GM10248 (cell line): ENCODE measurements at regions of chr7 and their contacts with region 1.

Region 1: DNA sequence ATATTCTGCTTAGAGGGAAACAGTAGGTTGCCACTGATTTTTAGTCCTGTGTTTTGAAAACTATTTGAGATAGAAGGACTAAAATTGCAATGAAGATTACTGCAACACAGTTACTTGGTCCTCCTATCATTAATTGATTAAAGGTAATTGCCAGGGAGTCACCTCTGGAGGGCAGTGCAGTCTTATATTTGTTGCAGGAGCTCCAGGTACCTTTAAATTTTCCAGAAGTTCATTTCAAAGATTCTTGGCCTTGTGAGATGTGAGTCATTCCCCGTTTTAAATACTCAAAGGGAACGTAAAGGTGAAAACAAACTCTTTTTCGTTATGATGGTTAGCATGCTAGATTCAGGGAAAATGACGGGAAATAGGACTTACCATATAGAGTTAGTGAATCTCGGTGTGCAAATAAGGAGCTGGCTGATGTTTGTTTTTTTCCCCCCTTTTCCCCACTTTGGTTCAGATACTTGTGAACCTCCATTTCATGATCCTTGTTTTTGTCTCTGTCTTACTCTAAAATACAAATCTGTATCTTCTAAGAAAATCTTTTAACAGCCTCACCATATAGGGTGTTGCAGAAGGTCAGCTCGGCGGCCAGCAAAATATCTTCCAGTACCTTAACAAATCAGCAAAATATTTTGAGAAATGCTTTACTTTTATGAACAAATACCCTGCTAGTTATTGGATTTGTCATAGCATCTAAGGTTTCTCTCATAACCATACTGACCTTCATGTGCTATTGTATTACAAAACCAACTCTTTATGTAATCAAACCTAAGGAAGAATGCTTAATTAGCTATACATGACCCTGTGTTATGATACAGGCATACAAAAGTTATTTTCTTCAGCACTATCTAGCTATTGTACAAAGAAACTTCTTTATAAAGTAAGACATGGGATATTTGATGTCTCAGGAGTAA is 143.0 kb upstream of the HDAC9 start:
- DNase-seq: peak; percentile 15
- CTCF ChIP-seq: peak; percentile 56

Region 2: DNA sequence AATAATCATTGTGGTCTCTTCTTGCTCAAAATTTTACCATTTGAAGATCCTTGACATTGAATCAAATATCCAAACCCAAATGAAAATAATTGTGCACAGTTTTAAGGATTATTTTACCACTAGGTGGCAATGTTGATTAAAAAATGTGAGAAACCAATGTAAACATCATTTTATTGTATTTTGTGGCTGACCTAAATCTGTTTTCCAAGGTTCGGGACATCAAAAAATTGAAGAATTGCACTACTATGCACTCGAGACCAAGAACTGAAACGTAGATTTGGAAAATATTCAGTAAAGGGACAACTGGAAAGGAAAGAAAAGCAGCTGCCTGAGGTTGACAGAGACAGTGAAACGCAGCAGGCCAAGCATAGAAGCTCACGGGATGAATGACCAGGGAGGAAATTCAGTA is 671.6 kb before region 1 on chr7:
- CTCF ChIA-PET with region 1: interaction called, 10 read pairs
- POLR2A ChIA-PET with region 1: no interaction called
- DNase-seq: no peak
- CTCF ChIP-seq: peak; percentile 34

Region 3: GRCh38 chr7:18370633-18371032 is 18.0 kb after region 1 on chr7:
- CTCF ChIA-PET with region 1: interaction called, 17 read pairs
- POLR2A ChIA-PET with region 1: no interaction called
- DNase-seq: no peak
- CTCF ChIP-seq: no peak

Region 4: DNA sequence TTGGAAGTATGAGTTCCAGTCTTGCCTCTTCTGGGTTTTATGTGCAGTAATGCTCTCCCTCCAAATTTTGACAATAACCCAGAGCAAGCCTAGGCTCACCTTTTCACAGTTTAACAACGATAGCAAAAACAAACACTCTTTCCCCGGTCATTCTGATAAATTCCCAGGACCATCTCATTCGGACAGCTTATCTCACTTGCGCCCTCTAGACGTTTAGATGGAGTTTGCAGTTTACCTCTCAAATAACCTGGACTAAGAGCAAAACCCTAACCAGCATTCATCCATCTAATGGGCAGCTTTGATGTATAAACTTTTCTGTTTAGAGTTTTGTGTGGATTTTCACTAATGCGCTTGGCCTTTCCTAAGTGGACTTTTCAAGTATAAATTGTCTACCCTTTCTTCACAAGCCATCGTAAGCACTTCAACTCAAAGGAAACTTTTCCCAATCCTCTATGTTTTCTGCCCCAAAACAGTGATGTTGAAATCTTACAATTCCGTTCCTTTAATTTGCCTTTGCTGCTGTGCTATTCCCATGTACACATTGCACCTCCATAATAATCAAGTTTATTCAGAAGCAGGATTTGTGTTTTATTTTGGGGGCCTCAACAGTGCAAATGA is 257.8 kb after region 1 on chr7:
- CTCF ChIA-PET with region 1: interaction called, 17 read pairs
- POLR2A ChIA-PET with region 1: no interaction called
- DNase-seq: peak; percentile 10
- CTCF ChIP-seq: peak; percentile 61

Region 5: GRCh38 chr7:19051767-19052375 is 699.3 kb after region 1 on chr7:
- CTCF ChIA-PET with region 1: interaction called, 69 read pairs
- POLR2A ChIA-PET with region 1: no interaction called
- DNase-seq: peak; percentile 32
- CTCF ChIP-seq: peak; percentile 74